AG04449 (cell line): ENCODE measurements at regions of chrX and their contacts with region 1.

Region 1: DNA sequence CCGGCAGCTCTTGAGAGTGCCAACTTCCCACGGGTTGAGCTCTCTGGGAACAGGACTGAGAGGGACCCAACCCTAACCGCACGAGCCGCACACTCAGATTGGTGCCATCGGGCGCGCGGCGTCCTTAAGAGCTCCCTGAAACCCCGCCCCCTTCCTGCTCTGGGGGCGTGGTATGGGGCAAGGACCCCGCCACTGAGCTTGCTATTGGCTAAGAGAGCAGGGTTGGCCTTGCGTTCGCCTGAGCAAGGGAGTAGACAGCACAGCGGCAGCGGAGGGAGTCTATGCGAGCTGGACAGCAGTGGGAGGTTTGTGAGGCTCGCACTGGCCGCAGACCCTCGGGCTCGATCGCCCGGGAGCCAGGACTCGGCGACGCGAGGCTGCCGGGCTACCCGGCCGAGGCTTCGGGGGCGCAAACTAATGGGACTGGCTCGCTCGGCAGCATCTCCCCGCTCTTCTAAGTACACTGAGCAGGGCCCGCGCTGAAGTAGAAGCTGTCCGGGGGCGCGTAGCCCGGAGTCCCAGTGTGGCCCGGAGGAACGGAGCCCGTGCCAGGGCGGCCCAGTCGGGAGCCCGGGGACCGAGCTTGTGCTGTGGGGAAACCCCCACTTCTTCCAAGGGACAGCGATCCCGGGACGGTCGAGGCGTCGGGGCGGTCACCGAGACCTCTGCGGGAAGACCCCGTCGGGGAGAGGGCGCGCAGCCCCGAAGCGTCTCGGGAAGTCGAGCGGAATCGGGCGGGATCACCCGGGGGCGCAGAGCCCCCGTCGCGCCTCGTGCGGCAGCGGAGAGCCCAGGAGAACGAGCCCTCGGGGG is at the start of gene EFNB1:
- DNase-seq: peak; percentile 87
- H3K4me3 ChIP-seq: peak within 1 kb of the TSS; percentile 67
- CTCF ChIP-seq: no peak

Region 2: DNA sequence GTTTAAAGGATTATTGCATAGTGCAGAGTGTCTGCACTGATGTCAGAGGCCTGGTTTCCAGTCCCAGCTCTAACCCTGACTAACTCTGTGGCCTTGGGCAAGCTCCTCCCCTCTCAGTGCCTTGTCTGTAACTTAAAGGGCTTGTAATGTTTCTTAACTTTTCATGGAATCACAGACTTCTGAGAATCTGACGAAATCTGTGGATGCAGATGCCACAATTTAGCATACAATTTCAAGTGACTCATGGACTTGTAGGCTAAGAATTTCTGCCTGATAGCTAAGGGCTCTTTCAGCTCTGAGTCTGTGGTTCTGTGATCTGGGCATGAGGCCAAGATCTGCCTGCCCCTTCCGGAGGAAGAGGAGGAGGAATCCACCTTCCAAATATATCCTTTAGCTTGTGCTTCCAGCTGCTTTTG is 1048.2 kb before region 1 on chrX:
- CTCF ChIA-PET with region 1: no interaction called
- POLR2A ChIA-PET with region 1: no interaction called
- DNase-seq: peak; percentile 91
- H3K4me3 ChIP-seq: no peak overlapping the region
- CTCF ChIP-seq: no peak

Region 3: GRCh38 chrX:67917421-67918010 is 911.4 kb before region 1 on chrX:
- CTCF ChIA-PET with region 1: no interaction called
- POLR2A ChIA-PET with region 1: no interaction called
- DNase-seq: no peak
- H3K4me3 ChIP-seq: no peak overlapping the region
- CTCF ChIP-seq: no peak

Region 4: GRCh38 chrX:68807818-68808217 is 21.1 kb before region 1 on chrX:
- CTCF ChIA-PET with region 1: no interaction called
- POLR2A ChIA-PET with region 1: no interaction called
- DNase-seq: no peak
- H3K4me3 ChIP-seq: no peak overlapping the region
- CTCF ChIP-seq: peak; percentile 3

Region 5: DNA sequence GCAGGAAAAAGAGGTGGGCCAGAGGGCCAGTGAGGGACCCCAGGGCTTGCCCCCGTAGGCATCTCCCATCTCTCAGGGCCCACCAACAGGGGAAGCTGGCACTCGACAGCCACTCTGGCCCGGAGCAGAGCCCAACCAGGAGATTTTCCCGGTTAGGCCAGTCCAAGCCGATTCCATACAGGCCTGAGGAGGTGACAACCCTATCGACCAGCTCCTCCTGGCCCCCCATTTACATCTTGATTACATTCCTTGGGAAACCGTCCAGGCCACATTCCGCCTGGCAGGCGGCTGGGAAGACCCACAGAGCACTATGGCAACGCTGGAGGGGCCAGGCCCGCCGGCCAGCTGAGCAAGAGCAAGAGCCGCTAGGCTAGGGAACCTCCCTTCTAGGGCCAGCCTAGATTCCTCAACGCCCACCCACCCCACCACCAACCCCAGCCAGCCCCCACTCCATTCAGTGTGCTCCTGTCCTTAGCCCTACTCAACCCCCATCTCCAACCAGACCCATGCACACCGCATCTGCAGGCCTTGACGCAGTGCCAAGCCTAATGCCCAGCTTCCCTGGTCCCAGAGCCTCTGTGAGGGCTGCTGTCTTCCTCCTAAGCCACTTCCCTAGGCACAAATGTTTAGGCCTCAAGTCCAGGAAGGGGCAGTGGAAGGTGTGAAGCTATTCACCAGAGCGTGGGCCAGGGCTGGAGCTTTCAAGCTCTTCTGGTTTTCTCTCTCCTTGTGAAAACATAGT is 161.1 kb after region 1 on chrX:
- CTCF ChIA-PET with region 1: interaction called, 4 read pairs
- POLR2A ChIA-PET with region 1: interaction called, 10 read pairs
- DNase-seq: peak; percentile 51
- H3K4me3 ChIP-seq: no peak overlapping the region
- CTCF ChIP-seq: no peak

Region 6: DNA sequence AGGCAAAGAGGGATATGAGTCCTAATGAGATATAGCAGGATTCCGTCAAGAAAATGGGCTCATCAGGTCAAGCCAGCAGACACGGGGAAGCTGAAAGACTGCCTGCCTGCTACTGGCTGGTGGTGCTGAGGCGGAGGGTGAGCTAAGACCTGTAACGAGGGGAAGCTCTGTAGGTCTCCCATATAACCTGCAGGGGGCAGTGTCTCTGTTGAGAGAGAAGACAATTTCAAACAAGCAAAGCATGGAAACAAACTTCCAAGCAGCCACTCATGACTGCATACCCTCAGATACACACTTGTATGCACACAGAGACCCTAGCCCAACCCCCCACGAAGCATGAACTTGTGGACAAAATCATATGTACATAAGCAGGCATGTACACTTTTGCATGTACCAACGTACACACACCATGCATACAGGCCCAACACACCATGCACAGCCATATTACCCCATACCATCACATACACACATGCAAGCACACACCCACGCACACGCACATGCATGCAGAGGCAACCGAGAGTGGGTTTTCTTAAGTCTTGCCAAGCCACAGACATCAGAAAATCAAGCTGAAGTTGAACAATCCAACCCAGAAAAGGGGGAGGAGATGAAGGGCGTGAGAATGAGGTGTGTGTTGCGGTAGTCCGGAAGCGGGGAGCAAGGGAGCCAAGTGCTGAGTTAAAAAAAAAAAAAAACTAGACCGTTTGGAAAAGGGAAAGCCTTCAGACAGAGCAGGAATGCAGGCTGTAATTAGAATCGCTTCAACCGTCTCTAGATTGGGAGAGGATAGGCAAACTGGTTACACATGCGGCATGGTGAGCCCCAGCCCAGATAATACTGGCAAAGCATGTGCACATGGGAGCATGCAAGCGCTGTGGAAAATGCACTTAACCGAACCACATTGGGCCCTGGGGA is 265.3 kb after region 1 on chrX:
- CTCF ChIA-PET with region 1: interaction called, 15 read pairs
- POLR2A ChIA-PET with region 1: interaction called, 4 read pairs
- DNase-seq: no peak
- H3K4me3 ChIP-seq: no peak overlapping the region
- CTCF ChIP-seq: peak; percentile 50

Region 7: GRCh38 chrX:69137371-69138117 is 308.6 kb after region 1 on chrX:
- CTCF ChIA-PET with region 1: interaction called, 15 read pairs
- POLR2A ChIA-PET with region 1: interaction called, 8 read pairs
- DNase-seq: no peak
- H3K4me3 ChIP-seq: no peak overlapping the region
- CTCF ChIP-seq: no peak

Region 8: DNA sequence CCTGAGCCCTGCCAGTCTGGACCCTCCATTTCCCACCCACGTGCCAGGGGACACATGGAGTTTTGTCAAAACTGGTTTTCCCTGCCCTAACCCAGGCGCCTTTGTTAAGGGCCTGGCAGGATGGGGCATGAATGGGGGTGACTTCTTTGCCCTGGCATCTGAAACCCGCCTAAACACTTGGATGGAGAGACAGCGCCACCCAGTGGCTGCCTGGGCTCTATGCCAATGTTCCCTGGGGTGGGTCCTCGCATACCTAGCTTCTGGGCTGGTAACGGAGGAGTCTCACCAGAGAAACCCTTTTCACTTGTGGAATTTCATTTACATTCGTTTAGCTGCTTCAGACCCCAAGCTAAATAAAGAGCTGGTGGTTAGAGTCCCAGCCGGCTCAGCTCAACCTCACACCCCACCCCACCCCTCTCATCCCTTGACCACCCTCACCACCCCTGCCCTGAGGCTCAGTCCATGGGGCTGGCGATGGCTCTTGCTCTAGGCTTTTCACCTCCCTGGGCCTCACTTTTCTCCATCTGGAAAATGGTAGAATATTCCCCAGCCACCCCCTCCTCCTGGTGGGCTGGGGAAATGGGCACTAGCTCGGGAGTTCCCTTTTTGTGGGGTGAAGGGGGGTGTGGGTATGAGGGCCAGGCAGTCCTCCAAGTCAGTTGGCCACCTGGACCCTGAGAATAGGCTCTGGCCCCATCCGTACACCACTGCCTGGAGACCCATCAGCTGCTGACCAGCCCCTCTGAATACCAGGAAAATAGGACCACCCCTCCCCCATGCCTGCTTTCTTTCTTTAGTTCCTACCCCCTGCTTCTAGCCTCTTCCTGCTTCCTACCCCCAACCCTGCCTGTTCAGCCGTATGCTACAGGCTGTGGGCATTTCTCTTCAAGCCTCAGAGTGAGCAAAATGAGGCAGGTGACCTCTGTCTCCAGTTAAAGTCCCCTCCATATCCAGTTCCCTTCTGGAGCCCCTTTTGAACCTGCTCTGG is 393.5 kb after region 1 on chrX:
- CTCF ChIA-PET with region 1: interaction called, 281 read pairs
- POLR2A ChIA-PET with region 1: interaction called, 12 read pairs
- DNase-seq: no peak
- H3K4me3 ChIP-seq: no peak overlapping the region
- CTCF ChIP-seq: peak; percentile 79

Region 9: GRCh38 chrX:69285881-69286564 is 457.1 kb after region 1 on chrX:
- CTCF ChIA-PET with region 1: interaction called, 33 read pairs
- POLR2A ChIA-PET with region 1: interaction called, 12 read pairs
- DNase-seq: no peak
- H3K4me3 ChIP-seq: peak overlapping the region; percentile 52
- CTCF ChIP-seq: peak; percentile 87

Region 10: GRCh38 chrX:69387567-69388487 is 558.9 kb after region 1 on chrX:
- CTCF ChIA-PET with region 1: interaction called, 64 read pairs
- POLR2A ChIA-PET with region 1: no interaction called
- DNase-seq: no peak
- H3K4me3 ChIP-seq: no peak overlapping the region
- CTCF ChIP-seq: peak; percentile 62